Ascending aorta (tissue), 2 donors: ENCODE measurements at regions of chr5 and their contacts with region 1.

Region 1: GRCh38 chr5:150904479-150905318 is at the start of gene ZNF300:
- DNase-seq: peak; percentile 10 to 89
- H3K4me3 ChIP-seq: peak within 1 kb of the TSS; percentile 62 to 63
- H3K27ac ChIP-seq: peak within 1 kb of the TSS; percentile 21 to 42
- H3K4me1 ChIP-seq: no peaks in the 10 kb centered on the region
- H3K27me3 ChIP-seq: no peaks in the 10 kb centered on the region
- CTCF ChIP-seq: no peak
- total RNA-seq, gene ZNF300: 2.9 TPM

Region 2: DNA sequence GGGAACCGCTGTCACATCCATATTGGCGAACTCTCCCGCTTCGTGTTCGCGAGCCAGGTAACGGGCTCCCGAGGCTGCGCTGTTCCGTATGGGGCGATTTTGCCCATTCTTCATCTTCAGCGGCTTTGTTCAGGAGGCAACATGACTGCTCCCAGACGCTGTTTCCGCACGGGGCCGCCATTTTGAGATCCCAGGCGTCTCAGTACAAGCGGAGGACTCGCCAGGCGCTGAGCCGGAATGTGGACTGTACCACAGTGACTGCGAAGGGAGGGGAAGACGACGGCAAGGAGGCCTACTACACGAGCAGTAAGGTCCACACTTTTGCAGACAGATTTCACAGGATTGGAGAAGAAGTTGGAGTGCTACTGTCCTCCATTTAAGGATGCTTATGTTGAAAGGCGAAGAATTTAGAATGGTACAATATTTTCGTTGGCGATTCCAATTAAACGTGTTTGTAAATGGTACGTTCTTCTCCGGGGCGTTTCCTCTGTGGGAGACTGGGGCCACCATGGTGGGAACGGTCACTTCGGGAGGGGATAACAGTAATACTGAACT is 41.7 kb after region 1 on chr5:
- intact Hi-C with region 1: loop called (anchors 2 kb)
- DNase-seq: peak in 1 of 2 donors; percentile 89
- H3K4me3 ChIP-seq: peak overlapping the region; percentile 68 to 69
- H3K27ac ChIP-seq: peak overlapping the region; percentile 83 to 86
- H3K4me1 ChIP-seq: no peaks in the 10 kb centered on the region
- H3K27me3 ChIP-seq: no peaks in the 10 kb centered on the region
- CTCF ChIP-seq: no peak